ENCODE measurements at regions of chr15 and their contacts with region 1.

Region 1: DNA sequence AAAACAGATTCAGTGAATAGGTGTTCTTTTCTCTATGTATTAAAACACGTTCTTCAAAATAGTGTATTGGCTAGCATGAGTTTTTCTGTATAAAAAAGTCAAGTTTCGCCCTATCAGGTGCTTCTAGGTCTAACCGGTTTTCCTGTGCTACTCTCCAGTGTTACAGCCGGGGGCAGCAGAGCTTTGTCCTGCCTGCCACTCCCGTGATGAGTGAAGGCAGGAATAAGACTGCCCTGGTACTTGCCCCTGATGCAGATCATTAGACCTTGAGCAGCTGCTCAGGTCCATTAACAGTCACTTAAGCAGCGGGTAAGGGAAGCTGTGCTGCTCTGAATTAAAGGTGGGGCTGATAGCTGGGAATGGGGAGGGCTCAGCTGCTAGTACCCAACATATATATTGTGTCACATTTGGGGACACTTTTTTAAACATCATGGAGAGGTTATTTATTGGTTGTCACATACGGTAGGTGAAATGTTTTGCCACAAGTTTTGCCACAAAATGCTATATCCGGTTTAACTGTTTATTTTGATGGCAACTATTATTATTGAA is 1.3 kb upstream of the UNC13C start:
- DNase-seq: no peak
- H3K4me3 ChIP-seq: no peak overlapping the region
- H3K27ac ChIP-seq: no peak overlapping the region
- H3K4me1 ChIP-seq: peaks cover 8% of the 10 kb centered on the region
- H3K27me3 ChIP-seq: peaks cover 8% of the 10 kb centered on the region
- CTCF ChIP-seq: peak; percentile 24 to 57

Region 2: DNA sequence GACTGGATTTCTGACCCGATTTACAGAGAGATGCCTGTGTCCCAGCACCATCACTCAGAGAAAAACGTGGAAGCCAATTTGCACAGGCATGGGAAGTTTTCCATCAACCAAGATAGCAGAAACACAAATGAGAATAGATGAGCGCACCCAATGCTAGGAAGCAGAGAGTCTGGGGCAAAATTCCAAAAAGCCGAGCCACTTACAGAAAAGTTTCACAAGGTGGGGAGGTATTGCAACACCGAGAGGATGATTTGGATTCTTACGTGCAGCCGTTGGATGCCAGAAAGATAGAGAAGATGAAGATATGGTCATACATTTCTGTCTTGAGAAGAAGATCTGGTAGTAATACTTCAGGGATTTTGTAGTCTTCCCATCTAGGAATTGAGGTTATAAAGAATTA is 58.7 kb after region 1 on chr15:
- CTCF ChIA-PET with region 1: no interaction called
- dilution Hi-C with region 1: no loop called
- in situ Hi-C with region 1: no loop called
- intact Hi-C with region 1: no loop called
- DNase-seq: no peak
- H3K4me3 ChIP-seq: no peak overlapping the region
- H3K27ac ChIP-seq: no peak overlapping the region
- H3K4me1 ChIP-seq: no peaks in the 10 kb centered on the region
- H3K27me3 ChIP-seq: no peaks in the 10 kb centered on the region
- CTCF ChIP-seq: no peak

Region 3: GRCh38 chr15:54159012-54159411 is 182.1 kb after region 1 on chr15:
- CTCF ChIA-PET with region 1: no interaction called
- dilution Hi-C with region 1: no loop called
- in situ Hi-C with region 1: no loop called
- intact Hi-C with region 1: loop called (anchors 10 kb)
- DNase-seq: no peak
- H3K4me3 ChIP-seq: no peak overlapping the region
- H3K27ac ChIP-seq: no peak overlapping the region
- H3K4me1 ChIP-seq: no peaks in the 10 kb centered on the region
- H3K27me3 ChIP-seq: no peaks in the 10 kb centered on the region
- CTCF ChIP-seq: no peak

Region 4: DNA sequence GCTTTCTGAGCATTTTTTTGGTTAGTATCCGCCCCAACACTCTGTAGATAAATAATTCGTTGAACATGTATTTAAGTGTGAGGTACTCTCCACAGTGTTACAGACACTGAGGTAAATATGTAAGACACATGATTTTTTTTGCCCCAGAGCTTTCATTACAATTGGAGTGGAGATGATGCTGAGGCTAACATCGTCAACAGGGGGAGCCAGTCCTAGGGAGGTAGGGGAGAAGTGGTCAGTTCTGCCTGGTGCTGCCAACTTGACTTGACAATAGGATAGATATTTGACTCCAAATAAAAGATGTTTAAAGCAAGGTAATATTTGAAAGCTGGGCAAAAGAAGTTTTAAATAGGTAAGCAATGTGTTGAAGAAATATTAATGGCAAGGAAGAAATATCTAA is 297.0 kb after region 1 on chr15:
- CTCF ChIA-PET with region 1: no interaction called
- dilution Hi-C with region 1: no loop called
- in situ Hi-C with region 1: no loop called
- intact Hi-C with region 1: loop called (anchors 2 kb)
- DNase-seq: no peak
- H3K4me3 ChIP-seq: no peak overlapping the region
- H3K27ac ChIP-seq: no peak overlapping the region
- H3K4me1 ChIP-seq: no peaks in the 10 kb centered on the region
- H3K27me3 ChIP-seq: no peaks in the 10 kb centered on the region
- CTCF ChIP-seq: peak in 1 of 2 donors; percentile 9

Region 5: GRCh38 chr15:54353726-54354125 is 376.8 kb after region 1 on chr15:
- CTCF ChIA-PET with region 1: no interaction called
- dilution Hi-C with region 1: no loop called
- in situ Hi-C with region 1: no loop called
- intact Hi-C with region 1: loop called (anchors 10 kb)
- DNase-seq: no peak
- H3K4me3 ChIP-seq: no peak overlapping the region
- H3K27ac ChIP-seq: no peak overlapping the region
- H3K4me1 ChIP-seq: no peaks in the 10 kb centered on the region
- H3K27me3 ChIP-seq: no peaks in the 10 kb centered on the region
- CTCF ChIP-seq: no peak

Region 6: DNA sequence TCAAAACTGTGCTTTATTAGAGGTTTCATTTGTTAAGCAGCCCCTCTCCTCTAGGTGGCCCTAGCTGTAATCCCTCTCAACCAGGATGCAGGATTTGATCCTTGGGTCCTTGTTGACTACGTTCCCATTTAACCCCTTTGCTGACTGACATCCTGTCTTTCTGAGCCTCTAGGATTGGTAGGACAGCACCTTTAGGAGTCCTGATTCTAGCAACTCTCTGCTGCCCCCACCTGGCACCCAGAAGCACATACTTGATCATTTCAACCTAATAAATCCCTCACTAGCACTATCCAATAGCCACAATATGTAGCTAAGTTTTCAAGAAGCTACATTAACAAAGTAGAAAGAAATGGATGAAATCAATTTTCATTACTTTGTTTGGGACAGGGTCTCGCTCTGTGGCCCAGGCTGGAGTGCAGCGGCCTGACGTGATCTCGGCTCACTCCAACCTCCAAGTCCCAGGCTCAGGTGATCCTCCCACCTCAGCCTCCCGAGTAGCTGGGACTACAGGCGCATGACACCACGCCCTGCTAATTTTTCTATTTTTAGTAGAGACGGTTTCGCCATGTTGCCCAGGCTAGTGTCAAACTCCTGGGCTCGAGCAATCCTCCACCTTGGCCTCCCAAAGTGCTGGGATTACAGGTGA is 1191.5 kb after region 1 on chr15:
- CTCF ChIA-PET with region 1: no interaction called
- dilution Hi-C with region 1: no loop called
- in situ Hi-C with region 1: loop called in 1 of 2 experiments (anchors 25 kb)
- intact Hi-C with region 1: loop called (anchors 1 kb)
- DNase-seq: peak; percentile 54
- H3K4me3 ChIP-seq: no peak overlapping the region
- H3K27ac ChIP-seq: no peak overlapping the region
- H3K4me1 ChIP-seq: no peaks in the 10 kb centered on the region
- H3K27me3 ChIP-seq: no peaks in the 10 kb centered on the region
- CTCF ChIP-seq: peak; percentile 63 to 81